ENCODE measurements at regions of chr18 and their contacts with region 1.

Region 1: GRCh38 chr18:69380324-69380723 is 20.4 kb upstream of the DOK6 start:
- DNase-seq: no peak

Region 2: DNA sequence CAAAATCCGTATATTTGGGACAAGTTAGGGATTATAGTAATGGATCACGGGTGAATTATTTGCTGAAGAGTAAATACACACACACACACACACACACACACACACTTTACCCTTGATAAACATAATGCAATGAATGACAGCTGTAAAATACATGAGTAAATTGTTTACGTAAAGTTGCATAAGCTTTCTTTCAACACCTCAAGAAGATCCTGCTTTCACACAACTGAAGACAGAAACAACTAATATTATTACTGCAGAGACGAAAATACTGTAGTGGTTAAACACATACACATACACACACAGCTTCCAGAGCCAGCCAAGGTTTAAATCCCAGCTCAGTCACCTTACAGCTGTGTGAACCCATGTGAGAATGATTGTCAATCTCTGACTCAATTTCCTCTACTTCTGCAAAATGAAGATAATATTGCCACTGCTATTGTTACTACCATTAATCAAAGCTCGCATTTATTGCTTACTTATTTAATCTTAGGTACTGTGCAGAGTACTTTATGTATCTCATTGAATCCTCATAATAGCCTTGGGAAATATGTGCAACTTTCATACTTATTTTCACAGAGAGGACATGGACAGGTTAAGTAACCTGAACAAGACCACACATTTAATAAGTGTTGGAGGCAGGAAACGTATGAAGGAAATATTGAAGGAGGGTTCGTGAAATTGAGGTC is 30.3 kb before region 1 on chr18:
- intact Hi-C with region 1: loop called in 1 of 2 experiments (anchors 2 kb)
- DNase-seq: no peak

Region 3: DNA sequence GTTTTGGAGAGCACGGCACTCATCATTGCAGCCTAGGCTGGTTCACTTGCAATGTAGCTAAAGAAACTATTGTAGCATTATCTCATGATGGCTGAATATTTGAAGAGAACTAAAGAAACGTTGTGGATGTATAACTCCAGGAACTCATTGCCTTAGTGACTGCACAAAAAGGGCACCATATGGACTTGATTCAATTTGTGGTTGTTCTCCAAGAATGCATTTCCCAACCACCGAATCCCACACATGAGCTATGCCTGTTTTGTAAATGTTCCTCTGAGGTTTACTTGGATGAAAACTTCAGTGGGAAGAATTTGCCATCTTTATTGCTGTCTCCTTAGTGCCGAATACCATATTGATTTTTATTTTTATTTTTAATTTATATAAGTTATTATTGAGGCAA is 63.9 kb after region 1 on chr18:
- intact Hi-C with region 1: no loop called
- DNase-seq: no peak